ENCODE measurements at regions of chr17 and their contacts with region 1.

Region 1: DNA sequence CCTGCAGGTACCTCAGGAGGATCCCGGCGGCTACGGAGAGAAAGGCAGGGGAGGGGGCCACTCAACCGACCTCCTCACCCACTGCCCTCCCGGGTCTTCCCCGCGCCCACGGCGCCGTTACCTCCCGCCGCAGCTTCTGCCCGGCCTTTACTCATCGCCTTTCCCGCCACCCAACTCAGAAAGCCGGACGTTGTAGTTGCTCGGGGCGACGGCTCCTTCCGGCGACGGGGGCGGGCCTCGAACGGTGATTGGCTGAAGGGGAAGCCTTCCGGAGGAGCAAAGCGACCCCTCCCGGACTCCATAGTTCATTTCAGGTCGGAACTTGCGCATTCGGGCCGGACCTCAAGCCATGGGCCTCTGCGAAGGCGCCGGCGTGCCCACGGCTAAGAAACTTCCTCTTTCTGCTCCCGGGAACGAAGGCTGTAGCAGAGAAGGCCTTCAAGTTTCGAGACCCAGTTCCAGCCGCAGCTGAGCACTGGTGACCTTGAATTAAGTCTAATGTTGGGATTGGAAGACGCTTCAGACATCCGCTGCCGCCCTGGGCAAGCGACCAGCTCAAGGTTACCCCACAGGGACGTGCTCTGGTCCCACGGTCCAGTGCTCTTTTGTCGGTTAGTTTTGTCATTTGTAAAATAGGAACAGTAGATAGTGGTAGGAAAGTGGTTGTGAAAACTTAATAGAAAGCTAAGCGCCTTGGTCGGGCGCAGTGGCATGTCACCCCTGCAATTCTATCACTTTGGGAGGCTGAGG is at the start of gene PSMC3IP:
- DNase-seq: peak; percentile 96
- H3K4me3 ChIP-seq: peak within 1 kb of the TSS; percentile 77 to 91
- H3K27ac ChIP-seq: peak within 1 kb of the TSS; percentile 80 to 89
- H3K4me1 ChIP-seq: peaks cover 7 to 8% of the 10 kb centered on the region in 2 experiments; a peak in 2 of 4 replicates
- H3K27me3 ChIP-seq: no peaks in the 10 kb centered on the region
- CTCF ChIP-seq: peak; percentile 52
- EP300 ChIP-seq: 0 out of 4 replicates have a peak, but pooled peaks of 1 of the 2 experiments have one; percentile 15
- RAD21 ChIP-seq: no peak
- polyA plus RNA-seq, gene PSMC3IP: 14.2 and 17.3 TPM in 2 replicates

Region 2: GRCh38 chr17:42405963-42406495 is 171.7 kb before region 1 on chr17:
- CTCF ChIA-PET with region 1: no interaction called
- POLR2A ChIA-PET with region 1: no interaction called
- DNase-seq: peak; percentile 89
- H3K4me3 ChIP-seq: peak overlapping the region in 1 of 2 experiments; percentile 18; a peak in 1 of 4 replicates
- H3K27ac ChIP-seq: no peak overlapping the region; a peak in 1 of 4 replicates
- H3K4me1 ChIP-seq: peaks cover 18 to 35% of the 10 kb centered on the region in 2 experiments; a peak in 3 of 4 replicates
- H3K27me3 ChIP-seq: no peaks in the 10 kb centered on the region
- CTCF ChIP-seq: peak; percentile 79
- EP300 ChIP-seq: no peak
- RAD21 ChIP-seq: peak; percentile 92

Region 3: DNA sequence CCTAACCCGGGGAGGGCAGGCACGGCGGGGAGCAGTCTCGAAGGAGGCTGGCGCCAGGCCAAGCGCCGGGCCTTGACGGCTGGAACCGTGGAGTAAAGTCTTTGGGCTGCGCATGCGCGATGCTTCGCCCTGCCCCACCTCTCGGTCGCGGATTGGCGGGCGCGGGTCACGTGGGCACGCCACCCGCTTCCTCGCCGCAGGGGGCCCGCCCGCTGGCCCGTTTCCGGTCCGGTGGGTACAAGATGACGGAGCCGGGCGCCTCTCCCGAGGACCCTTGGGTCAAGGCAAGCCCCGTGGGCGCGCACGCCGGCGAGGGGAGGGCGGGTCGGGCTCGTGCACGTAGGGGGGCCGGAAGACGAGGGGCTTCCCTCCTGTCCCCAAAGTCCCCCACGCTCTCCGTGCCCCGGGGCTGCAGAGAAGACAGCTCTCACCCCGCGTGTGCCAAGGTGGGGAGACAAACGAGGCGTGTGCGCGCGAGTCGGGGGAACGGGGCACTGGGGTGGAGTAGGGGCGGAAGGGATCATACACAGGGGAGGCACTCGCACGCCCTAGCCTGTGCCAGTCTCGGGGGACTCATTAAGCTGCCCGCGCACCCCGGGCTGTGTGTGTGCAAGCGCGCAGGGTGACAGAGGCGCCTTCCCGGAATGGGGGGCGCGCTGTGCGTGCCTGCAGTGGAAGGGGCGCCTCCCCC is 10.7 kb before region 1 on chr17 and contains the start of gene MLX:
- CTCF ChIA-PET with region 1: interaction called, 47 read pairs
- POLR2A ChIA-PET with region 1: interaction called, 7 read pairs
- DNase-seq: peak; percentile 100
- H3K4me3 ChIP-seq: peak within 1 kb of the TSS; percentile 76 to 92
- H3K27ac ChIP-seq: peak within 1 kb of the TSS; percentile 58 to 91
- H3K4me1 ChIP-seq: peaks cover 4 to 28% of the 10 kb centered on the region in 2 experiments; a peak in 3 of 4 replicates
- H3K27me3 ChIP-seq: no peaks in the 10 kb centered on the region
- CTCF ChIP-seq: no peak; the same call in 1 of the 2 replicates
- EP300 ChIP-seq: no peak
- RAD21 ChIP-seq: no peak
- polyA plus RNA-seq, gene MLX: 44.5 and 66.4 TPM in 2 replicates

Region 4: DNA sequence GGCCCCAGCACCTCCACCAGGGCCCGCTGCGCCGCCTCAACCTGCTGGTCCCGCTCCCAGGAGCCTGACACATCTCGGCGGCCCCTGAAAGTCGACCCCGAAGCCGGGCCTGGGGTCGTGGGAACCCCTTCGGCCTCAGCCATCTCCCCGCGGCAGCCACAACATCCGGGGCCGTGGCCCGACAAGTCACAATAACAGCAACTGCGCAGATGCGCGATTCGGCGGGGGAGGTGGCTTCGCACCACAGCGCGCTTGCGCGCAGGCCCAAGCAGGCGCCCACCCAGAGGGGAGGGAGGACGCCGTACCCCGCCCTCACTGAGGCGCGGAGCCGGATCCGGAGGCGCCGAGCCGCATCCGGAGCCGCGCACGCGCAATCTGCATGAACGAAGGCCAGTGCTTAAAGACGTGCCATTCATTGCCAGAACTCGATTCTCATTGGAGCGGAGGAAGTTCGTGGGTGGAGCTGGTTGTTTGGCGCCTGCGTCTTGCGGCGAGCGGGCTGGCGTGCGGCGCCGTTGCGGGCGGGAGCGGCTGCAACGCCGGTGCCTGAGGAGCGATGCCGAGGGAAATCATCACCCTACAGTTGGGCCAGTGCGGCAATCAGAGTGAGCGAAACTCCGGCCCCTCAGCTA is 31.6 kb after region 1 on chr17 and contains the starts of genes RETREG3 and TUBG1:
- CTCF ChIA-PET with region 1: interaction called, 33 read pairs
- POLR2A ChIA-PET with region 1: interaction called, 4 read pairs
- DNase-seq: peak; percentile 100
- H3K4me3 ChIP-seq: peak within 1 kb of the TSS; percentile 72 to 99
- H3K27ac ChIP-seq: peak within 1 kb of the TSS; percentile 80 to 91
- H3K4me1 ChIP-seq: peaks cover 0 to 6% of the 10 kb centered on the region in 2 experiments; a peak in 2 of 4 replicates
- H3K27me3 ChIP-seq: no peaks in the 10 kb centered on the region
- CTCF ChIP-seq: peak; percentile 43
- EP300 ChIP-seq: no peak
- RAD21 ChIP-seq: peak; percentile 11; the same call in 1 of the 2 replicates
- polyA plus RNA-seq, gene RETREG3: 13.3 and 24.9 TPM in 2 replicates
- polyA plus RNA-seq, gene TUBG1: 72.4 and 145 TPM in 2 replicates

Region 5: DNA sequence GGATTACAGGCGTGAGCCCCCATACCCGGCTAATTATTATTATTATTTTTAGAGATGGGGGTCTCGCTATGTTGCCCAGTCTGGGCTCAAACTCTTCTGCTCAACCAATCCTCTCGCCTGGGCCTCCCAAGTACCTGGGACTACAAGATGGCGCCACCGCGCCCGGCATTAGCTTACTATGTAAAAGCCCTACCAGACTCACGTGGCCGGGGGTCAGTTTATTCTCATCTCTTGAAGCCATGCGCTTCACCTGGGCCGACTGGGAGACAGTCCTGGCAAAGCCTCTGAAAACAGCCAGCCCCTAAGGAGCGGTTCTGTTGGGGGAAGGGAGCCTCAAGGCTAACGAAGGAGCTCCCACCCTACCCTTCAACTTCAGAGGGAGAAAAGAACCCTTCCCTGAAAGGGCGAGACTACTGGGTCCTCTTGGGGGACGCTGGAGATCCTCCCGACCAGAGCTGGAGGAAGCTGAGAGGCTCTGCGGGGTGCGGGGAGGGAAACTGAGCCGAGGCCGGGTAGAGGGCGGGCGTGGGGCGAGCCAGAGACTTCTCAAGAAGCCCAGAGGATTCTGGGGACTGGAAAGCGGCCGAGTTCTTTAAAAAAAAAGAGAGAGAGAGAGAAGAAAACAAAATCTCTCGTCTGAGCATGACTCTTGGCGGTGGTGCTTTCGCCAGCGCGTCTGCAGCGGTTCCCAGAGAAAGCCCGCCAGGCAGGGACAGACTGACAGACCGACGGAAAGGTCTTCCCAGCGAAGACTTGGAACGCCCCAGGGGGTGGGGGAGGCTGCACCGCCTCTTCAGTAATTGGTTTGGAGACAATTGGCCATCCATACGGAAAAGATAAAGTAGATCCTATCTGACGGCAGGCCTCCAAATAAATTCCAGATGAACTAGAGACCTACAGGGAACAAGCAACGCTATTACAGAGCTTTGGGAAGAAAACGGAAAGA is 75.7 kb after region 1 on chr17:
- CTCF ChIA-PET with region 1: interaction called, 36 read pairs
- POLR2A ChIA-PET with region 1: interaction called, 8 read pairs
- DNase-seq: peak; percentile 83
- H3K4me3 ChIP-seq: peak overlapping the region; percentile 32 to 40
- H3K27ac ChIP-seq: peak overlapping the region; percentile 87 to 93
- H3K4me1 ChIP-seq: peaks cover 0 to 12% of the 10 kb centered on the region in 2 experiments; a peak in 1 of 4 replicates
- H3K27me3 ChIP-seq: no peaks in the 10 kb centered on the region
- CTCF ChIP-seq: no peak
- EP300 ChIP-seq: peak in 1 of 2 experiments; percentile 97; a peak in 3 of 4 replicates
- RAD21 ChIP-seq: 0 out of 2 replicates have a peak, but pooled peaks have one; percentile 25

Region 6: DNA sequence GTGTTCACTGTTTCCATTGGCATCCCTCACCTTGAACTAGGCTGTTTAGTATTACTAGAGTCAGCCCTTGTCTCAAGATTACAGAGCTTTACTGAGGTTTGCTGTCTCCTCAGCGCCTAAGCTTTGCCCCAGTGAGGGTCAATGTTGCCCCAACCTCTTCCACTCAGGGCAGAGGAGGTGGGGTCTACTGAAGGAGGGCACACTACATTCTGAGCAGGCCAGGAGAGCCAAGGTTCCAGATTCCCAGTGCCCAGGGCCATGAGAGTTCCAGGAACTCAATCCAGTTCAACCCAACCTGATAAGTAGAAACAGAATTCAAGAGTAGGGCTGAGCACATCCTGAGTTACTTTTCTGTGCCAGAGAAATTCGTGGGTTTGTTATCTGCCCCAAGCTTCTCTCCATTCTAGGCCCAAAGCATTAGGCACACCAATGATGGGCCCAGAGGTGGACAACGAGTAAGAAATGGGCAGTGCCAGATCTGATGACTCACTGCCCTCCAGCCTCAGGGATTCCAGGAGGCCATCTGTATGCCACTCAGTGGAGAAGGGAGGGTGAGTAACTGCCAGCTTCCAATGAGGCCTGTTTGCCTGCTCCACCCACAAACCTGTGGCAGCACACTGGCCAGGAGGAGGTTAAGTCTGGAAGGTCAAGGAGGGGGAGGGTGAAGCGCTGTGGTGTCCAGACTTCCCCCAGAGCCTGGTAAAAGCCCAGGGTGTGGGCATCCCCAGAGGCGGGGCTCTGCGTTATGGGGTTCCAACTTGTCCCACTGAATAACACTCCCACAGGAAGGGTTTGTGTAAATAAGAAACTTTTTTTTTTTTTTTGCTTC is 89.6 kb after region 1 on chr17:
- CTCF ChIA-PET with region 1: interaction called, 37 read pairs
- POLR2A ChIA-PET with region 1: interaction called, 3 read pairs
- DNase-seq: peak; percentile 85
- H3K4me3 ChIP-seq: no peak overlapping the region
- H3K27ac ChIP-seq: peak overlapping the region; percentile 75 to 93
- H3K4me1 ChIP-seq: peaks cover 13 to 30% of the 10 kb centered on the region in 2 experiments
- H3K27me3 ChIP-seq: no peaks in the 10 kb centered on the region
- CTCF ChIP-seq: no peak
- EP300 ChIP-seq: peak in 1 of 2 experiments; percentile 53; a peak in 2 of 4 replicates
- RAD21 ChIP-seq: no peak; the same call in 1 of the 2 replicates

Region 7: GRCh38 chr17:42698736-42699414 is 121.2 kb after region 1 on chr17:
- CTCF ChIA-PET with region 1: interaction called, 26 read pairs
- POLR2A ChIA-PET with region 1: no interaction called
- DNase-seq: peak; percentile 32
- H3K4me3 ChIP-seq: no peak overlapping the region
- H3K27ac ChIP-seq: no peak overlapping the region; a peak in 1 of 4 replicates
- H3K4me1 ChIP-seq: peaks cover 0 to 6% of the 10 kb centered on the region in 2 experiments; a peak in 2 of 4 replicates
- H3K27me3 ChIP-seq: no peaks in the 10 kb centered on the region
- CTCF ChIP-seq: no peak
- EP300 ChIP-seq: no peak
- RAD21 ChIP-seq: no peak

Region 8: DNA sequence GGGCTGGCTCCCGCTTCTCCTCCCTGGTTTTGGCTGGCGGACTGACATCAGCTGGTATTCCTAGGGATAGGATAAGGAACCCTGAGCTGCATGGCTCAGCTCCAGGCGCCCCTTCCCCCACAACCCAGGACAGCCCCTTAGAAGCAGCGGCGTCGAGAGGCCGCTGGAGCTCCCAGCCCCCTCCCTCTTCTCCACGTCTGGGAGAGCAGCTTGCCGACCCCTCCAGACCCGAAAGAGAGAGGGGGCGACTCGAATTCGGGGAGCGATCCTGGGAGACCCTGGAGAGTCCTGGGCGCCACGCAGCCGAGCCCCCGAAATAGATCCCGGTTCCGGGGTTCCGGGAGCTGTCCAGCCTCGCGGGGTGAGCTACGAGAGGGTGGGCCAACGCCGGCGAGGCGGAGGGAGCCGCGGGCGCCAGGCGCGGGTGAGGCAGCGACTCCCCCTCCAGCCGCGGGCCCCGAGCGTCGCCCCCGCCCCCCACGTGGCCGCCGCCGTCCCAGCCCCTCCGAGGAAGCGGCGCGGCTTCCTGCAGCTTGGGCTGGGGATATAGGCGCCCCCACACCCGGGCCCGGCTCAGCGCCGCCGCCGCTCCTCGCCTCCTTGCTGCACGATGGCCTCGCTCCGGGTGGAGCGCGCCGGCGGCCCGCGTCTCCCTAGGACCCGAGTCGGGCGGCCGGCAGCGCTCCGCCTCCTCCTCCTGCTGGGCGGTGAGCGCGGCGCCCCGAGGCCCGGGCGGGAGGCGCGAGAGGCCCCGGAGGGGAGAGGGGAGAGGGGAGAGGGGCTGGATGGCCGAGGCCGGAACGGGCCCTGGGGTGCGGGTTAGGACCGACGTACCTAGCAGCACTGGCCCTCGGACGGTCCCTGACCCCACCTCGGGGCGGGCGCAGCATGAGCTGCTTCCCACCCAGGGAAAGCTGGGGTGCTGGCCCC is 183.2 kb after region 1 on chr17 and contains the start of gene RAMP2:
- CTCF ChIA-PET with region 1: interaction called, 34 read pairs
- POLR2A ChIA-PET with region 1: no interaction called
- DNase-seq: peak; percentile 84
- H3K4me3 ChIP-seq: peak within 1 kb of the TSS; percentile 39 to 43; a peak in 3 of 4 replicates
- H3K27ac ChIP-seq: no peak within 1 kb of the TSS
- H3K4me1 ChIP-seq: peaks cover 5 to 16% of the 10 kb centered on the region in 2 experiments; a peak in 2 of 4 replicates
- H3K27me3 ChIP-seq: peaks cover 12% of the 10 kb centered on the region; the same call in 1 of the 2 replicates
- CTCF ChIP-seq: no peak
- EP300 ChIP-seq: no peak
- RAD21 ChIP-seq: no peak
- polyA plus RNA-seq, gene RAMP2: 2.5 and 3.0 TPM in 2 replicates

Region 9: GRCh38 chr17:43676471-43676870 is 1098.8 kb after region 1 on chr17:
- CTCF ChIA-PET with region 1: no interaction called
- POLR2A ChIA-PET with region 1: no interaction called
- DNase-seq: no peak
- H3K4me3 ChIP-seq: no peak overlapping the region
- H3K27ac ChIP-seq: no peak overlapping the region
- H3K4me1 ChIP-seq: peaks cover 0 to 3% of the 10 kb centered on the region in 2 experiments; a peak in 1 of 4 replicates
- H3K27me3 ChIP-seq: no peaks in the 10 kb centered on the region
- CTCF ChIP-seq: no peak
- EP300 ChIP-seq: no peak
- RAD21 ChIP-seq: no peak